ENCODE measurements at regions of chr3 and their contacts with region 1.

Region 1: GRCh38 chr3:177359593-177360357 is 162.5 kb upstream of the TBL1XR1 start:
- DNase-seq: peak; percentile 97
- ATAC-seq: peak; percentile 78
- H3K4me3 Mint-ChIP-seq: peak overlapping the region; percentile 68
- H3K27ac Mint-ChIP-seq: peak overlapping the region; percentile 92
- H3K4me1 Mint-ChIP-seq: peaks cover 56% of the 10 kb centered on the region
- H3K27me3 Mint-ChIP-seq: no peaks in the 10 kb centered on the region

Region 2: GRCh38 chr3:177050501-177051237 is 309.1 kb before region 1 on chr3:
- CTCF ChIA-PET with region 1: interaction called, 6 read pairs
- POLR2A ChIA-PET with region 1: no interaction called
- intact Hi-C with region 1: loop called (anchors 1 to 2 kb)
- DNase-seq: no peak
- ATAC-seq: peak; percentile 60
- H3K4me3 Mint-ChIP-seq: no peak overlapping the region
- H3K27ac Mint-ChIP-seq: peak overlapping the region; percentile 31
- H3K4me1 Mint-ChIP-seq: peaks cover 12% of the 10 kb centered on the region
- H3K27me3 Mint-ChIP-seq: no peaks in the 10 kb centered on the region

Region 3: DNA sequence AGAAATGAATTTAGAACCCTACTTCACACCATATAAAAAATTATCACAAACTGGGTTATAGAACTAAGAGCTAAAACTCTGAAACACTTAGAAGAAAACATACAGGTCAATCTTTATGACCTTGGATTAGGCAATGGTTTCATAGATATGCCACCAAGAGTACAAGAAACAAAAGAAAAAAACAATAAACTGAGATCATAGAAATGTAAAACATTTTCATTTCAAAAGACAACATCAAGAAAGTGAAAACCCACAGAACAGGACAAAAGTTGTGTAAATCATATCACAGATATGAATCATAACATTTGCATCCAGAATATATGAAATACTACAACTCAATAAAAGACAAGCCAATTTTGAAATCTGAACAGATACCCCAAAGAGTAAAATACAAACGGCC is 234.9 kb before region 1 on chr3:
- CTCF ChIA-PET with region 1: no interaction called
- POLR2A ChIA-PET with region 1: no interaction called
- intact Hi-C with region 1: loop called in 1 of 2 experiments (anchors 5 kb)
- DNase-seq: no peak
- ATAC-seq: peak; percentile 68
- H3K4me3 Mint-ChIP-seq: no peak overlapping the region
- H3K27ac Mint-ChIP-seq: peak overlapping the region; percentile 40
- H3K4me1 Mint-ChIP-seq: peaks cover 81% of the 10 kb centered on the region
- H3K27me3 Mint-ChIP-seq: no peaks in the 10 kb centered on the region

Region 4: GRCh38 chr3:177197041-177197727 is 162.6 kb before region 1 on chr3 and contains the start of gene TBL1XR1:
- CTCF ChIA-PET with region 1: interaction called, 11 read pairs
- POLR2A ChIA-PET with region 1: interaction called, 15 read pairs
- intact Hi-C with region 1: loop called (anchors 1 kb)
- DNase-seq: peak; percentile 91
- ATAC-seq: peak; percentile 34
- H3K4me3 Mint-ChIP-seq: peak within 1 kb of the TSS; percentile 88
- H3K27ac Mint-ChIP-seq: peak within 1 kb of the TSS; percentile 99
- H3K4me1 Mint-ChIP-seq: peaks cover 65% of the 10 kb centered on the region
- H3K27me3 Mint-ChIP-seq: no peaks in the 10 kb centered on the region
- total RNA-seq, gene TBL1XR1: 164 to 226 TPM

Region 5: GRCh38 chr3:177337541-177338331 is 22.0 kb before region 1 on chr3:
- CTCF ChIA-PET with region 1: no interaction called
- POLR2A ChIA-PET with region 1: interaction called, 12 read pairs
- intact Hi-C with region 1: loop called (anchors 1 kb)
- DNase-seq: peak; percentile 89
- ATAC-seq: peak; percentile 89
- H3K4me3 Mint-ChIP-seq: peak overlapping the region; percentile 23
- H3K27ac Mint-ChIP-seq: peak overlapping the region; percentile 78
- H3K4me1 Mint-ChIP-seq: peaks cover 41% of the 10 kb centered on the region
- H3K27me3 Mint-ChIP-seq: peaks cover 6% of the 10 kb centered on the region

Region 6: GRCh38 chr3:177419904-177420601 is 60.3 kb after region 1 on chr3:
- CTCF ChIA-PET with region 1: no interaction called
- POLR2A ChIA-PET with region 1: no interaction called
- intact Hi-C with region 1: loop called (anchors 1 kb)
- DNase-seq: peak; percentile 31
- ATAC-seq: peak; percentile 93
- H3K4me3 Mint-ChIP-seq: peak overlapping the region; percentile 37
- H3K27ac Mint-ChIP-seq: peak overlapping the region; percentile 86
- H3K4me1 Mint-ChIP-seq: peaks cover 38% of the 10 kb centered on the region
- H3K27me3 Mint-ChIP-seq: no peaks in the 10 kb centered on the region

Region 7: GRCh38 chr3:177597311-177598096 is 237.7 kb after region 1 on chr3:
- CTCF ChIA-PET with region 1: no interaction called
- POLR2A ChIA-PET with region 1: interaction called, 6 read pairs
- intact Hi-C with region 1: loop called in 1 of 2 experiments (anchors 10 kb)
- DNase-seq: peak; percentile 51
- ATAC-seq: peak; percentile 68
- H3K4me3 Mint-ChIP-seq: peak overlapping the region; percentile 45
- H3K27ac Mint-ChIP-seq: peak overlapping the region; percentile 88
- H3K4me1 Mint-ChIP-seq: peaks cover 70% of the 10 kb centered on the region
- H3K27me3 Mint-ChIP-seq: no peaks in the 10 kb centered on the region

Region 8: GRCh38 chr3:177968891-177969290 is 609.1 kb after region 1 on chr3:
- CTCF ChIA-PET with region 1: no interaction called
- POLR2A ChIA-PET with region 1: no interaction called
- intact Hi-C with region 1: no loop called
- DNase-seq: no peak
- ATAC-seq: no peak
- H3K4me3 Mint-ChIP-seq: no peak overlapping the region
- H3K27ac Mint-ChIP-seq: no peak overlapping the region
- H3K4me1 Mint-ChIP-seq: no peaks in the 10 kb centered on the region
- H3K27me3 Mint-ChIP-seq: no peaks in the 10 kb centered on the region

Measured in activated CD4-positive, alpha-beta T cell treated with anti-CD3 and anti-CD28 coated beads for 36 hours (primary cell).